Mammary epithelial cell (primary cell): ENCODE measurements at regions of chr2 and their contacts with region 1.

Region 1: GRCh38 chr2:38274286-38275276 is 102.5 kb downstream of the ATL2 start:
- DNase-seq: peak; percentile 58
- H3K4me3 ChIP-seq: no peak overlapping the region
- H3K27ac ChIP-seq: no peak overlapping the region
- H3K4me1 ChIP-seq: no peaks in the 10 kb centered on the region
- H3K27me3 ChIP-seq: no peaks in the 10 kb centered on the region
- CTCF ChIP-seq: peak; percentile 56 to 65

Region 2: GRCh38 chr2:37389989-37390765 is 884.4 kb before region 1 on chr2:
- CTCF ChIA-PET with region 1: no interaction called
- dilution Hi-C with region 1: no loop called
- in situ Hi-C with region 1: loop called in 1 of 2 experiments (anchors 25 kb)
- intact Hi-C with region 1: loop called (anchors 5 kb)
- DNase-seq: peak; percentile 98
- H3K4me3 ChIP-seq: no peak overlapping the region
- H3K27ac ChIP-seq: peak overlapping the region; percentile 85
- H3K4me1 ChIP-seq: peaks cover 43% of the 10 kb centered on the region
- H3K27me3 ChIP-seq: no peaks in the 10 kb centered on the region
- CTCF ChIP-seq: no peak

Region 3: DNA sequence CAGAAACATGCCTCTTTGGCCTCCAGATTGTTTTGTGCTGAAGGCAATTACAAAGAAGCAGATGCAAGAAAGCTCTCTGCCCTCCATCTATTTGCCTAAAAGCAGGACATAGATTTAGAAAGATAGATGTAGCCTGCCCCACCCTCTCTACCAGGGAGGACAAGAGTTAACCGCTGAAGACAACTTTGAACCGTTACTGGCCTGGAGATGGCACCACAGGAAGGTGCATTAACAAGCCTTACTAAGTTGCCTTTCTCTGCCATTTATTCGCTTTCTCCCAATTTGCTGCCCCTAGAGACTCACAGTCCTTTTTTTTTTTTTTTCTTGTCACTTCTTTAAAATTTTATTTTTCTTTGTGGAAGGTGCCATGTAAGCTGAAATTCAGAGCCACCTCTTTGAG is 378.3 kb before region 1 on chr2:
- CTCF ChIA-PET with region 1: no interaction called
- dilution Hi-C with region 1: no loop called
- in situ Hi-C with region 1: no loop called
- intact Hi-C with region 1: loop called (anchors 1 kb)
- DNase-seq: no peak
- H3K4me3 ChIP-seq: no peak overlapping the region
- H3K27ac ChIP-seq: no peak overlapping the region
- H3K4me1 ChIP-seq: peaks cover 16% of the 10 kb centered on the region
- H3K27me3 ChIP-seq: no peaks in the 10 kb centered on the region
- CTCF ChIP-seq: no peak

Region 4: GRCh38 chr2:38115216-38116032 is 159.2 kb before region 1 on chr2:
- CTCF ChIA-PET with region 1: no interaction called
- dilution Hi-C with region 1: no loop called
- in situ Hi-C with region 1: loop called in 1 of 2 experiments (anchors 10 kb)
- intact Hi-C with region 1: loop called (anchors 1 kb)
- DNase-seq: peak; percentile 70
- H3K4me3 ChIP-seq: no peak overlapping the region
- H3K27ac ChIP-seq: peak overlapping the region; percentile 29
- H3K4me1 ChIP-seq: peaks cover 25% of the 10 kb centered on the region
- H3K27me3 ChIP-seq: no peaks in the 10 kb centered on the region
- CTCF ChIP-seq: peak; percentile 100

Region 5: DNA sequence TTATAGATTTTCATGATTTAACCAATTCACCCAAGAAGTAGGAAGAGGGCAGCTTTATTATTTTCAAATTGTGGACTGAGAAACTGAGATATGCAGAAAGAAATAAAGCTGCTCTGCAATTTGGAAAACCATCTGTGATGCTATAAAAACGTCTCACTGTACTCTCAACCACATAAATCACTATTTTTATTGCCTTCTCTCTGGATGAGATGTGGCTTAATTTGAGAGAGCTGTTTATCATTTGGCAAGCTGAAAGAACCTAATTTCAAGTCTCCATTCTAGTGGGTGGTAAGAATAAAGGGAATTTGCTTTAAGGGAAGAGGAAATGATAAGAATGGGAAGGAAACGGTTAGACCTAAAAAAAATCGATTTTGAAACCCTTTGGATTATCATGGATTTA is 148.7 kb before region 1 on chr2:
- CTCF ChIA-PET with region 1: no interaction called
- dilution Hi-C with region 1: no loop called
- in situ Hi-C with region 1: no loop called
- intact Hi-C with region 1: no loop called
- DNase-seq: no peak
- H3K4me3 ChIP-seq: no peak overlapping the region
- H3K27ac ChIP-seq: no peak overlapping the region
- H3K4me1 ChIP-seq: peaks cover 5% of the 10 kb centered on the region
- H3K27me3 ChIP-seq: no peaks in the 10 kb centered on the region
- CTCF ChIP-seq: no peak

Region 6: GRCh38 chr2:38164881-38165280 is 109.7 kb before region 1 on chr2:
- CTCF ChIA-PET with region 1: no interaction called
- dilution Hi-C with region 1: no loop called
- in situ Hi-C with region 1: no loop called
- intact Hi-C with region 1: loop called (anchors 2 kb)
- DNase-seq: no peak
- H3K4me3 ChIP-seq: no peak overlapping the region
- H3K27ac ChIP-seq: no peak overlapping the region
- H3K4me1 ChIP-seq: peaks cover 19% of the 10 kb centered on the region
- H3K27me3 ChIP-seq: no peaks in the 10 kb centered on the region
- CTCF ChIP-seq: no peak

Region 7: DNA sequence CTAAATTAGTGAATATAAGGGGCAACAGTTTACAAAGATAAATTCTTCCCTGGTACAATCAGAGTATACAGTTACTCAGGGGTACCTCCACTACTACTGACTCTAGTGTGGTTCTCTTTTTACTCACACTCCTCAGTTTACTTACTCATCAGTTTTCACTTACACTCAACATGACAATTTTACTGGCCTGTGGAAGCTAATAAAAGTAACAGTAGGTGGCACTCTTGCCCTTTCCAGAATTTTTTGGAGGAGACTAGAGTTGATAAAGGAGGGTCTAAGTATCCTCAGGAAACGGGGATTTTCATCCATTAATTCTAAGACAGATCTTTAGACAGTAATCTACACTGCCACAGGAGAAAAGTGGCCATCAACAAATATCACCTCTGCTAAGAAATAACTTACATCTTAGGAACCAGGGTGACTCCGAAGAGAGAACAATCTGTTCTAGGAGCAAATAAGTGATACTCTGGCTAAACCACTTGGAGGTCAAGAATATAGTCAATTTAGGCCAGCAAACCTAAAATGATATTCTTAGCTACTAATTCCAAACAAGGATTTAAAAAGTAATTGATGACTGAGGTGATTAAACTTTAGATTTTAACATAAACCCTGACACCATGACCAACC is 41.2 kb after region 1 on chr2:
- CTCF ChIA-PET with region 1: interaction called, 17 read pairs
- dilution Hi-C with region 1: no loop called
- in situ Hi-C with region 1: no loop called
- intact Hi-C with region 1: no loop called
- DNase-seq: peak; percentile 35
- H3K4me3 ChIP-seq: no peak overlapping the region
- H3K27ac ChIP-seq: no peak overlapping the region
- H3K4me1 ChIP-seq: peaks cover 6% of the 10 kb centered on the region
- H3K27me3 ChIP-seq: no peaks in the 10 kb centered on the region
- CTCF ChIP-seq: peak; percentile 68 to 71